Ascending aorta (tissue), 2 donors: ENCODE measurements at regions of chr13 and their contacts with region 1.

Region 1: DNA sequence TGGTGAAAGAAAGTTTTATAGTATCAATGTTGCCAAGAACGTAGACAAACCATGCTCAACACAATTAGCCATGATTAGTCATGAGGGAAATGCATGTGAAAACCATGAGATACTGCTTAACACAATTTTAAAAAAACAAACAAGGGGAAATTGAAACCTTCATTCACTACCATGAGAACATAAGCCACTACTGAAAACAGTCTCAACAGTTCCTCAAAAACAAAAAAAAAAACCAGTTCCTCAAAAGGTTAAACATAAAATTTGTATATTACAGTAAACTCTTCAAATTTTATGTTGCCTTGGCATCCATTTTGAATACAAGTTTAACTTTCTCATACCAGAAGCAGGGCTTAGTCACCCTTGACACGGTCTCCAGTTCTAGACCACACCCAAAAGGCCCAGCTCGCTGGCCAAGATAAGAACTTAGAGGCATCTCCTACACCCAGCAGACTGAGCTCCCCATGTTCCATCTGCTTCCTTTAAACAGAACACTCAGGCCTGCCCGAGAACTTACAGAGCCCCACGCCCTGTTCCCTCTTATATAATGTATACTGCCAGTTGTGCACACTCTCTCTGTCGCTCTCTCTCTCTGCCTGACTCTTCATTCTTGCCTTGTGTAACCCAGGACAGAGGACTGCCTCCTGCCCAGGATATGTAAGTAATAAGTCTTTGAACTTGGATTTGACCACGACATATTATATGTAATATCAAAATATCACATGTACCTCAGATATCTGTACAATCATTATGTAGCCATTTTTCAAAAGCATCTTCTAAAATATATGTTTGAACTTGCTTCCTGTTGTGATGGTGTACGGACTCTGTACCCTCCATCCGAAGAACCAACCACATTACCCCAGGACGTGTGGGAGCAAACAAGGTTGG is 67.4 kb downstream of the STK24 start:
- DNase-seq: peak; percentile 33 to 80
- H3K4me3 ChIP-seq: no peak overlapping the region
- H3K27ac ChIP-seq: peak overlapping the region; percentile 53 to 71
- H3K4me1 ChIP-seq: peaks cover 7 to 34% of the 10 kb centered on the region in 2 donors
- H3K27me3 ChIP-seq: no peaks in the 10 kb centered on the region
- CTCF ChIP-seq: no peak

Region 2: DNA sequence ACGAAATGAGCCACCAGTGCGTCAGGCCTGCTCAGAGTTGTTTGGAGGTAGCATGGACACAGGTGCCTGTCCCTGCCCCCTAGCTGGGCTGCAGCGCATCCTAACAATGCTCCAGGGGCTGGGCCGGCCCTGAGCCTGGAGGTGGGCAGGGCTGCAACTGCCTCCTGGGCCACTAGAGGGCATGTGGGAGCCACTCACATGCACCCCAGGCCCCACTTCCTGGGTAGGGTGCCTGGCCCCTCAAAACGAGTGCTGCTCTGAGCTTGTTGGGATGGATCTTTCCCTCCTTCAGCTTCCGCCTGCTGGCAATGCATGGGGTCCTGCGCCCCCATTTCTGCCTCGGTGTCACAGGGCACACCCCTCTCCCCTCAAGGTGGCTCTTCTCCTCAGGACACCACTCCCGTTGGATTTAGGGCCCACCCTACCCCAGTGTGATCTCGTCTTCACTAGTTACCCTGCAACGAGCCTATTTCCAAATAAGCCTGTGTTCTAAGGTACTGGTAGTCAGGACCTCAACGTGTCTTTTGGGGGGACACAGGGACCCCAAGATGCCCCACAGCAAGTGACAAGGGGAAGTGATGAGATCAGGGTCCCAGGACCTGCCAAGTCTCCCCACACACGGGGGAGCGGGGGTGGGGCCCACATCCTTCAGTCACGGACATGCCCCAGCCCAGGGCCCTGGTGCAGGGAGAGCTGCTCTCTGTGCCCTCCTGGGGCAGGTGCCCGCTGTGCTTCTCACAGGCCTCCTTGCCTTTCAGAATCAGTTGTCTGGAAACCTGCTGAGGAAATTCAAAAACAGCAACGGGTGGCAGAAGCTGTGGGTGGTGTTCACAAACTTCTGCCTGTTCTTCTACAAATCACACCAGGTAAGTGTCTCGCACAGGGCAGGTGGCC is 63.9 kb before region 1 on chr13:
- intact Hi-C with region 1: no loop called
- DNase-seq: peak in 1 of 2 donors; percentile 81
- H3K4me3 ChIP-seq: no peak overlapping the region
- H3K27ac ChIP-seq: no peak overlapping the region
- H3K4me1 ChIP-seq: peaks cover 2 to 9% of the 10 kb centered on the region in 2 donors
- H3K27me3 ChIP-seq: no peaks in the 10 kb centered on the region
- CTCF ChIP-seq: peak; percentile 91 to 96 (median 95)

Region 3: DNA sequence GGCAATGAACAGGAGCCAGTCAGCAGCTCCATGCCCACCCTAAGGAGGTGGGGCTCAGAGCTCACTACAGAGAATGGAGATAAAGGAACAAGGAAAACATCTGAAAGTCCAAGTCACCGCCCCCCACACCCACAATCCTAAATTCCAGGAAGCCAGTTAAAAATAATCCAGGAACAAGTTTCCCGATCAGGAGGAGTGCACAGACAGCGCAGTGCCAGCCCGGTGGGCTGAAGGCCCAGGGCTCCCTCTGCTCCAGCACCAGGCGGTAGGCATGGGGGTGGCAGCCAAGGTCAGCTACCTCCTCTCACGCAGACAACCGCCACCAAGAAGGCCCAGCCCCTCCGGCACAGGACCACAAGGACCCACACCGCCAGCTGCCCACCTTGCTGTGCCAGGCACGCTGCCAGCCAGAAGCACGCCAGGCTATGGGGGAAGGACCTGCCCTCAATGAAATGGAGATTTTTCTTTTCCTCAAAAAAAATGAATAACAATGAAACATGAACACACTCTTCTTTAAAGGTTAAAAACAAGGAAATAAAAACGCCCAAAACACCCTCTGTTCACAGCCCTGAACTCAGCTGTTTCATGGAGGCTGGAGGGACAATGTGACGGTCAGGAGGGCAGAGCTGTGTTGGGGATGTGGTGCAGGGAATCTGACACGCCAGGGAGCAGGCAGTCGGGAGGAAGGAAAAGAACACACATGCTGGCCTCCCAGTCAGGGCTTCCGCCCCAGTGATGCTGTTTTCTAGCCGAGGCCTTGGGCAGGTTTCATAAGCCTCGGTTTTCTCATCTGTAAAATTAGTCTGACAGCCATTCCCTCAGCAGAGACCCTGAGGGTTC is 56.4 kb after region 1 on chr13:
- intact Hi-C with region 1: loop called (anchors 5 kb)
- DNase-seq: peak in 1 of 2 donors; percentile 75
- H3K4me3 ChIP-seq: peak overlapping the region; percentile 31 to 49
- H3K27ac ChIP-seq: peak overlapping the region; percentile 80 to 83
- H3K4me1 ChIP-seq: peaks cover 0 to 16% of the 10 kb centered on the region in 2 donors
- H3K27me3 ChIP-seq: no peaks in the 10 kb centered on the region
- CTCF ChIP-seq: no peak